ENCODE measurements at regions of chr5 and their contacts with region 1.

Region 1: GRCh38 chr5:50440651-50441492 is at the start of gene EMB:
- DNase-seq: peak; percentile 91
- ATAC-seq: peak; percentile 74
- H3K4me3 ChIP-seq: peak within 1 kb of the TSS; percentile 64 to 86 (median 79)
- H3K4me3 Mint-ChIP-seq: peak within 1 kb of the TSS; percentile 95
- H3K27ac ChIP-seq: peak within 1 kb of the TSS; percentile 85 to 96
- H3K27ac Mint-ChIP-seq: peak within 1 kb of the TSS; percentile 96
- H3K4me1 ChIP-seq: peaks cover 38 to 44% of the 10 kb centered on the region in 2 donors
- H3K4me1 Mint-ChIP-seq: peaks cover 64% of the 10 kb centered on the region
- H3K27me3 ChIP-seq: no peaks in the 10 kb centered on the region
- H3K27me3 Mint-ChIP-seq: no peaks in the 10 kb centered on the region
- CTCF ChIP-seq: peak; percentile 56
- total RNA-seq, gene EMB: 95.5 and 95.7 TPM in 2 replicates

Region 2: DNA sequence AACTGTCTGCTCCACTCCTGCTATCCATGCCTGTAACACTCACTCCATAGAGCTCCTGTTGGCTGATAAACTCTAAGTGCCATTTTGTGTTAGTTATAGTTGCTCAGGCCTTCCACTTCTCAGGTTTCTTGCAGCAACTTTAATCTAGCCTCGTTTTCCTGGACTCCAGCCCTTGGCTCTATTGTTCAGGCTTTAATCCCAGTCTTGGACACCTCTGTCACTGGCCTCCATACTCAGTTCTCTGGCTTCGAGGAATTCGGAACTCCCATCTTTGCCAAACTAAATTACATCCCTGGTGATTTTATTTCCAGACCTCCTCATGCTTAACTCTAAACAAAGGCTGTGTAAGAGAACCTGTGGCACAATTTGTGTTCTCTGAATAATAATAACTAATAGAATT is 39.5 kb before region 1 on chr5:
- CTCF ChIA-PET with region 1: interaction called, 3 read pairs
- POLR2A ChIA-PET with region 1: no interaction called
- intact Hi-C with region 1: loop called (anchors 10 kb)
- DNase-seq: no peak
- ATAC-seq: no peak
- H3K4me3 ChIP-seq: no peak overlapping the region
- H3K4me3 Mint-ChIP-seq: no peak overlapping the region
- H3K27ac ChIP-seq: no peak overlapping the region
- H3K27ac Mint-ChIP-seq: no peak overlapping the region
- H3K4me1 ChIP-seq: no peaks in the 10 kb centered on the region
- H3K4me1 Mint-ChIP-seq: peaks cover 14% of the 10 kb centered on the region
- H3K27me3 ChIP-seq: no peaks in the 10 kb centered on the region
- H3K27me3 Mint-ChIP-seq: no peaks in the 10 kb centered on the region
- CTCF ChIP-seq: no peak

Region 3: DNA sequence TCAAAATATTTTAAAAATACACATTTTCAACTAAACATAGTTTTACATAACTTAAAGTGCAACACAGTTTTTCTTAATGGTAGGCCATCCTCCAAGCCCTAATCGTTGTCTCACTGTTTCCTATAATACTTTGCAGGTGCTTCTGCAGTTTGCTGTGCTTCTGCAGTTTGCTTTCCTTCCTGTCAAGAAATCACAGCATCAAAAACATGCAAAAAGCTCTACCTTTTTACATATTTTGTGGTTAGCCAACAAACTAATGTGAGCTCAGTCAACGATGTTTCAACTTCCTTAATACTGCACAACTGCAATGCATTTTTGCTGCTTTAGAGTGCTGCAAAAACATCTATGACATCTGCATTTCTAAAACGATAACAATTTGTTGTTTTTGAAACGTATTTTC is 25.0 kb before region 1 on chr5:
- CTCF ChIA-PET with region 1: interaction called, 7 read pairs
- POLR2A ChIA-PET with region 1: interaction called, 6 read pairs
- intact Hi-C with region 1: loop called (anchors 1 kb)
- DNase-seq: peak; percentile 79
- ATAC-seq: peak; percentile 87
- H3K4me3 ChIP-seq: peak overlapping the region in 1 of 5 experiments; percentile 36
- H3K4me3 Mint-ChIP-seq: peak overlapping the region; percentile 65
- H3K27ac ChIP-seq: peak overlapping the region in 1 of 2 donors; percentile 64
- H3K27ac Mint-ChIP-seq: peak overlapping the region; percentile 78
- H3K4me1 ChIP-seq: peaks cover 32% of the 10 kb centered on the region in 2 donors
- H3K4me1 Mint-ChIP-seq: peaks cover 69% of the 10 kb centered on the region
- H3K27me3 ChIP-seq: no peaks in the 10 kb centered on the region
- H3K27me3 Mint-ChIP-seq: no peaks in the 10 kb centered on the region
- CTCF ChIP-seq: no peak

Region 4: DNA sequence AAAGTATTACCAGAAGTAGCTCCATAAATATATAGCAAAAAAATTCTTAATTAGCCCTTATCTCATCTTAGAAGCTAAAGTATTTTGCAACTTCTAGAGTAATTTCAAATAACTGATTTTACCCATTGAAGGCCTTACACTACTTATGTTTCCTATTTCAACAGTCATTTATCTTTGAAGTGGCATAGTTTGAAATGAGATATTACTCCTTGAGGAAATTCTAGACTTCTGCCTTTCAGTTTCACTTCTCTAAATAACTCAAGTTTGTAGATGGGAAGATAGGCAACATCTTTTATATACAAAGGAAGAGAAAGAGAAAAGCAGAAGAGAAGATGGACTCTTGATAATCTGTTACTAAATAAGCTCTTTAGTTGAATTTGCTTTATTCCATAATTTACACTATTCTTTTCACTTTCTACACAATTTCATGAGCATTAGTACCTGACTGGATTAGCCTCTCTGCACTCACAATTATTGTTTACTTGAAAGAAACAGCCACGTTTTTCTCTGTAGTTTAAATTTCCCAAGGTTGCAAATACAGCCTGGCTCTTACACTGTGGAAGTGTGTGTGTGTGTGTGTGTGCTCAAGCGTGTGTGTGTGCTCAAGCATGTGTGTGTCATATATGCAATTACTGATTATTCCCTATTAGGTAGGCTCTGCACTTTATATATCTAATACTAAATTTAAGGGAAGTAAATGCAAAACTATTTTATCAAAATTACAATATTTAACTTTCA is 60.8 kb after region 1 on chr5:
- CTCF ChIA-PET with region 1: interaction called, 7 read pairs
- POLR2A ChIA-PET with region 1: no interaction called
- intact Hi-C with region 1: loop called (anchors 2 kb)
- DNase-seq: peak; percentile 78
- ATAC-seq: peak; percentile 94
- H3K4me3 ChIP-seq: peak overlapping the region in 3 of 5 experiments; percentile 15 to 60 (median 18)
- H3K4me3 Mint-ChIP-seq: peak overlapping the region; percentile 18
- H3K27ac ChIP-seq: peak overlapping the region; percentile 50 to 75
- H3K27ac Mint-ChIP-seq: peak overlapping the region; percentile 75
- H3K4me1 ChIP-seq: peaks cover 3 to 11% of the 10 kb centered on the region in 2 donors
- H3K4me1 Mint-ChIP-seq: peaks cover 17% of the 10 kb centered on the region
- H3K27me3 ChIP-seq: no peaks in the 10 kb centered on the region
- H3K27me3 Mint-ChIP-seq: no peaks in the 10 kb centered on the region
- CTCF ChIP-seq: no peak

Region 5: GRCh38 chr5:50547303-50547702 is 106.4 kb after region 1 on chr5:
- CTCF ChIA-PET with region 1: no interaction called
- POLR2A ChIA-PET with region 1: no interaction called
- intact Hi-C with region 1: no loop called
- DNase-seq: peak; percentile 36
- ATAC-seq: no peak
- H3K4me3 ChIP-seq: peak overlapping the region in 1 of 5 experiments; percentile 33
- H3K4me3 Mint-ChIP-seq: peak overlapping the region; percentile 29
- H3K27ac ChIP-seq: peak overlapping the region; percentile 8 to 66
- H3K27ac Mint-ChIP-seq: peak overlapping the region; percentile 23
- H3K4me1 ChIP-seq: peaks cover 7 to 9% of the 10 kb centered on the region in 2 donors
- H3K4me1 Mint-ChIP-seq: peaks cover 10% of the 10 kb centered on the region
- H3K27me3 ChIP-seq: no peaks in the 10 kb centered on the region
- H3K27me3 Mint-ChIP-seq: no peaks in the 10 kb centered on the region
- CTCF ChIP-seq: no peak

Region 6: GRCh38 chr5:50564079-50564478 is 123.2 kb after region 1 on chr5:
- CTCF ChIA-PET with region 1: no interaction called
- POLR2A ChIA-PET with region 1: no interaction called
- intact Hi-C with region 1: no loop called
- DNase-seq: no peak
- ATAC-seq: no peak
- H3K4me3 ChIP-seq: no peak overlapping the region
- H3K4me3 Mint-ChIP-seq: no peak overlapping the region
- H3K27ac ChIP-seq: no peak overlapping the region
- H3K27ac Mint-ChIP-seq: no peak overlapping the region
- H3K4me1 ChIP-seq: peaks cover 0 to 6% of the 10 kb centered on the region in 2 donors
- H3K4me1 Mint-ChIP-seq: peaks cover 7% of the 10 kb centered on the region
- H3K27me3 ChIP-seq: no peaks in the 10 kb centered on the region
- H3K27me3 Mint-ChIP-seq: no peaks in the 10 kb centered on the region
- CTCF ChIP-seq: no peak

Region 7: DNA sequence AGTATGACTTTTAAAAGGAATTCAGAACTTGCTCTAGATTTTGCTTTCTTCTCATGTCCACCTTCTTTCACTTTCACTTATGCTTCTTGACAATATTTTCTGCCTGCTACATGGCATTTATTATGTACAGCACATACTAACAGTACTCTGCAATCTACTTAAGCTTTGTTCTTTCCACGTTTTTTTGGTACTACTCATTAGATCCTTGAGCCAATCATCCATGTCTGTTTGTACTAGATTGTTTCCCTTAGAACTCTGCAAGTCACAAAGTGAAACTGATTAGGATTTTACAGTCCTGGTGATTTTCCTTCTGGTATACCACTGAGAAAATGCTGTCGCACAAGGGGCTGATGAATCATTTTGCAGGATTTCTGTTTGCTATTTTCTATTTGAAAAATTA is 303.9 kb after region 1 on chr5:
- CTCF ChIA-PET with region 1: no interaction called
- POLR2A ChIA-PET with region 1: interaction called, 3 read pairs
- intact Hi-C with region 1: loop called (anchors 5 kb)
- DNase-seq: peak; percentile 34
- ATAC-seq: peak; percentile 39
- H3K4me3 ChIP-seq: peak overlapping the region in 4 of 5 experiments; percentile 14 to 61 (median 36)
- H3K4me3 Mint-ChIP-seq: peak overlapping the region; percentile 87
- H3K27ac ChIP-seq: peak overlapping the region in 1 of 2 donors; percentile 61
- H3K27ac Mint-ChIP-seq: peak overlapping the region; percentile 67
- H3K4me1 ChIP-seq: peaks cover 16 to 22% of the 10 kb centered on the region in 2 donors
- H3K4me1 Mint-ChIP-seq: peaks cover 52% of the 10 kb centered on the region
- H3K27me3 ChIP-seq: no peaks in the 10 kb centered on the region
- H3K27me3 Mint-ChIP-seq: no peaks in the 10 kb centered on the region
- CTCF ChIP-seq: no peak